OCI-LY7 (cell line): ENCODE measurements at regions of chr7 and their contacts with region 1.

Region 1: GRCh38 chr7:106598663-106599342 is 62.2 kb downstream of the CCDC71L start:
- DNase-seq: peak; percentile 69
- H3K4me3 ChIP-seq: no peak overlapping the region
- H3K27ac ChIP-seq: no peak overlapping the region
- H3K4me1 ChIP-seq: peaks cover 3% of the 10 kb centered on the region
- CTCF ChIP-seq: no peak

Region 2: DNA sequence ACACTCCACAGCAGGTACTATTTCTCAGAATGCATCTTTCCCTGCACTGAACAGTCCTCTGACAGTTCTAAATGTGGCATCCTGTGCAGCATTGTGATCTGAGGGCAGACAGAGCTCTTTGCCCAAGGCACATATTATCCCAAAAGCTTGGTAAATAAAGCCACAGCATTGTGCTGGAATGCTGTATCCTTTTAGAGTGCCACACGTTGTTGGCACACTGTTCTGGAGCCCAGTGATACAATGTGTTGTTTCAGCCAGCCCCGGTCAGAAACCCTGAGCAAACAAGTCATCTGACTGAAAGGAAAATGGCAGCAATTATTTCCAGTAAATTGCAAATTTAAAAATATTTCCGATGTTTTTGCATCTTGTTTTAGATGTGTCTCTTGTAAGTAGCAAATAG is 359.4 kb before region 1 on chr7:
- CTCF ChIA-PET with region 1: no interaction called
- POLR2A ChIA-PET with region 1: no interaction called
- intact Hi-C with region 1: no loop called
- DNase-seq: no peak
- H3K4me3 ChIP-seq: no peak overlapping the region
- H3K27ac ChIP-seq: no peak overlapping the region
- H3K4me1 ChIP-seq: no peaks in the 10 kb centered on the region
- CTCF ChIP-seq: no peak

Region 3: GRCh38 chr7:106277976-106278375 is 320.8 kb before region 1 on chr7:
- CTCF ChIA-PET with region 1: no interaction called
- POLR2A ChIA-PET with region 1: no interaction called
- intact Hi-C with region 1: no loop called
- DNase-seq: no peak
- H3K4me3 ChIP-seq: no peak overlapping the region
- H3K27ac ChIP-seq: no peak overlapping the region
- H3K4me1 ChIP-seq: peaks cover 17% of the 10 kb centered on the region
- CTCF ChIP-seq: no peak

Region 4: GRCh38 chr7:106588422-106589198 is 10.2 kb before region 1 on chr7:
- CTCF ChIA-PET with region 1: no interaction called
- POLR2A ChIA-PET with region 1: interaction called, 16 read pairs
- intact Hi-C with region 1: no loop called
- DNase-seq: no peak
- H3K4me3 ChIP-seq: no peak overlapping the region
- H3K27ac ChIP-seq: no peak overlapping the region
- H3K4me1 ChIP-seq: no peaks in the 10 kb centered on the region
- CTCF ChIP-seq: no peak